H1 (cell line): ENCODE measurements at regions of chr2 and their contacts with region 1.

Region 1: GRCh38 chr2:42086500-42086953 is 38.7 kb downstream of the PKDCC start:
- DNase-seq: peak in 1 of 2 experiments; percentile 65
- H3K4me3 ChIP-seq: no peak overlapping the region
- H3K27ac ChIP-seq: no peak overlapping the region
- H3K4me1 ChIP-seq: peaks cover 0 to 6% (median under 1%) of the 10 kb centered on the region in 4 experiments; a peak in 3 of 7 replicates
- H3K27me3 ChIP-seq: peaks cover 0 to 5% (median 0%) of the 10 kb centered on the region in 4 experiments; a peak in 4 of 7 replicates
- CTCF ChIP-seq: peak; percentile 26 to 90 (median 75)
- EP300 ChIP-seq: no peak
- POLR2A ChIP-seq: no peak
- RAD21 ChIP-seq: peak; percentile 98 to 99

Region 2: GRCh38 chr2:41853427-41854216 is 232.9 kb before region 1 on chr2:
- CTCF ChIA-PET with region 1: interaction called, 490 read pairs
- POLR2A ChIA-PET with region 1: interaction called, 3 read pairs
- DNase-seq: peak; percentile 21 to 79
- H3K4me3 ChIP-seq: no peak overlapping the region
- H3K27ac ChIP-seq: no peak overlapping the region
- H3K4me1 ChIP-seq: peaks cover 0 to 3% (median 0%) of the 10 kb centered on the region in 4 experiments; a peak in 2 of 7 replicates
- H3K27me3 ChIP-seq: no peaks in the 10 kb centered on the region
- CTCF ChIP-seq: peak in 2 of 3 experiments; percentile 73 to 76; a peak in 3 of 4 replicates
- EP300 ChIP-seq: no peak
- POLR2A ChIP-seq: no peak
- RAD21 ChIP-seq: peak; percentile 92 to 97

Region 3: DNA sequence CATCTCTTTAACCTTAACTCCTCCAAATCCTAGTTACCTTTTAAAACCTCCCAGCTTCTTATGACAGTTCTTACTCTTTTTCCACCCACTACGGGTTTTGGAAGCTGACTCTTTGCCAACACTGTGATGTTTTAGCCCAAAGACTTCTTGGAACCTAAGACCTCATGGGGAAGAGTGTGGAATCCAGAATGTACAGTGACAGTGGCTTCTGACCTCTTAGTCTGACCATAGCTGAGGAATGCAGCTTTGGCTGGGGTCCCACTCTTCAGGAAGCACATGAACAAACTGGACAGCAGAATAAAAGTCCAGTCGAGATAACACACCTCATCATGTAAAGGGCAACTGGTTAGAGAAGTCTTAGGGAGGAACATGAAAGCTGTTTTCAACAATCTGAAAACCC is 199.8 kb before region 1 on chr2:
- CTCF ChIA-PET with region 1: interaction called, 890 read pairs
- POLR2A ChIA-PET with region 1: no interaction called
- DNase-seq: no peak
- H3K4me3 ChIP-seq: no peak overlapping the region
- H3K27ac ChIP-seq: no peak overlapping the region
- H3K4me1 ChIP-seq: no peaks in the 10 kb centered on the region
- H3K27me3 ChIP-seq: no peaks in the 10 kb centered on the region
- CTCF ChIP-seq: no peak
- EP300 ChIP-seq: no peak
- POLR2A ChIP-seq: no peak
- RAD21 ChIP-seq: no peak

Region 4: DNA sequence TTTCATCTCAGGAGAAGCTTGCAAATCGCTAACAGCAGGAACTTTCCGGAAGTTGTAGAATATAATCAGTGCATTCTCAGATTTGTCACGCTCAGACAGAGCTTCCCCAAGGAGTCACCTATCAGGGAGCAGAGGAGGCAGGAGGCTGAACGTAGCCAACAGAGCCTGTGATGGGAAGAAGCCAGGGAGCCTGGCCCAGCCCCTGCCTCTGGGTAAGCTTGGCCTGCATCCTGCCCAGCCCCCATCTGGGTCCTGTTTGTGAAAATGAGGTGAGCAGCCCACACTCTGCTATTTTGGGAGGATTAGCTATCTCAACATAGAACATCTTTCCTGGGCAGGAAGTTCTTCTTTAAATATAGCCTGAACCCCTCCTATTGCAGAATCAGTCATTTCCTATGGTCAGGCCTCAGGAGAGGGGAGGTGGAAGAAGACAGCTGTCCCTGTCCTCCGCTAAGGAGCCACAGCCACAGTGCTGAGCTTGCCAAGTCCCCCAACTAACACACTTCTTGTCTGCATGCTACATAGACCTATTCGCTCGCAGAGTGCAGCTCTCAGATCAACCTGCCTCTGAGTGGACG is 57.9 kb before region 1 on chr2:
- CTCF ChIA-PET with region 1: interaction called, 13 read pairs
- POLR2A ChIA-PET with region 1: interaction called, 3 read pairs
- DNase-seq: no peak
- H3K4me3 ChIP-seq: no peak overlapping the region
- H3K27ac ChIP-seq: no peak overlapping the region
- H3K4me1 ChIP-seq: peaks cover 19 to 42% (median 27%) of the 10 kb centered on the region in 4 experiments
- H3K27me3 ChIP-seq: peaks cover 0 to 12% (median 7%) of the 10 kb centered on the region in 4 experiments; a peak in 3 of 7 replicates
- CTCF ChIP-seq: no peak
- EP300 ChIP-seq: no peak
- POLR2A ChIP-seq: no peak
- RAD21 ChIP-seq: no peak

Region 5: DNA sequence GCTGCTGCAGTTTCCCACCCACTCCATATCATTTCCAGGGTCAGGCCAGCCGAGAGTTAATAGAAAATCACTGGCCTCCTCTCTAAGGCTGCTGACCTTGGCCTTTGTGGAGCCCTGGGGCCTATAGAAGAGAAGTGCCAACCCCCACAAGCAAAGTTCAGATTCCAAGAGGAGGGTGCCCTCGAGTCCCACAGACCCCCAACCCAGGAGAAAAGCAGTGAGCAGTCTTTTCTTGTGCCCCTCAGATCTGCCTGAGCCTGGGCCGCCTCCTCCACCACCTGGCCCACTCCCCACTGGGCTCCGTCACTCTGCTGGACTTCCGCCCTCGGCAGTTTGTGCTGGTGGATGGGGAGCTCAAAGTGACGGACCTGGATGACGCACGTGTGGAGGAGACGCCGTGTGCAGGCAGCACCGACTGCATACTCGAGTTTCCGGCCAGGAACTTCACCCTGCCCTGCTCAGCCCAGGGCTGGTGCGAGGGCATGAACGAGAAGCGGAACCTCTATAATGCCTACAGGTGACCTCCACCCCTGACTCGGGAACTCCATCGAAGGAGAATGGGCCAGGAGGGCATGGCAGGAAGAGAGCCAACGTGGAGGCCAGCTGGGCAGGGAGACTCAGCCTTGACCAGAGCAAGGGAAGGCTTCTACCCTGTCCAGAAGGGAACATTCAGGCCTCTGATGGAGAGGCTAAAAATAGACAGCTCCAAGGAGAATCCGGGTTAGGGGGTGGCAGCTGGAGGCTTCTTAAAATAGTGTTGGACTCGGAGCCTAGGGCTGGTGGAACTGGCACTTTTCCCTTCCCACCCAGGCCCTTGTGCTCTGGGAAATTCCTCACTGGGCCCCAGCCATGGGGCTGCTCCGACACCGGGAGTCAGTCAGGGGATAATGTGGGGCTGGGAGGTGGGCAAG is 32.5 kb before region 1 on chr2:
- CTCF ChIA-PET with region 1: interaction called, 61 read pairs
- POLR2A ChIA-PET with region 1: interaction called, 4 read pairs
- DNase-seq: no peak
- H3K4me3 ChIP-seq: no peak overlapping the region
- H3K27ac ChIP-seq: no peak overlapping the region
- H3K4me1 ChIP-seq: peaks cover 5 to 45% (median 36%) of the 10 kb centered on the region in 4 experiments
- H3K27me3 ChIP-seq: peaks cover 0 to 6% (median 4%) of the 10 kb centered on the region in 4 experiments; a peak in 5 of 7 replicates
- CTCF ChIP-seq: no peak
- EP300 ChIP-seq: no peak
- POLR2A ChIP-seq: no peak
- RAD21 ChIP-seq: no peak

Region 6: DNA sequence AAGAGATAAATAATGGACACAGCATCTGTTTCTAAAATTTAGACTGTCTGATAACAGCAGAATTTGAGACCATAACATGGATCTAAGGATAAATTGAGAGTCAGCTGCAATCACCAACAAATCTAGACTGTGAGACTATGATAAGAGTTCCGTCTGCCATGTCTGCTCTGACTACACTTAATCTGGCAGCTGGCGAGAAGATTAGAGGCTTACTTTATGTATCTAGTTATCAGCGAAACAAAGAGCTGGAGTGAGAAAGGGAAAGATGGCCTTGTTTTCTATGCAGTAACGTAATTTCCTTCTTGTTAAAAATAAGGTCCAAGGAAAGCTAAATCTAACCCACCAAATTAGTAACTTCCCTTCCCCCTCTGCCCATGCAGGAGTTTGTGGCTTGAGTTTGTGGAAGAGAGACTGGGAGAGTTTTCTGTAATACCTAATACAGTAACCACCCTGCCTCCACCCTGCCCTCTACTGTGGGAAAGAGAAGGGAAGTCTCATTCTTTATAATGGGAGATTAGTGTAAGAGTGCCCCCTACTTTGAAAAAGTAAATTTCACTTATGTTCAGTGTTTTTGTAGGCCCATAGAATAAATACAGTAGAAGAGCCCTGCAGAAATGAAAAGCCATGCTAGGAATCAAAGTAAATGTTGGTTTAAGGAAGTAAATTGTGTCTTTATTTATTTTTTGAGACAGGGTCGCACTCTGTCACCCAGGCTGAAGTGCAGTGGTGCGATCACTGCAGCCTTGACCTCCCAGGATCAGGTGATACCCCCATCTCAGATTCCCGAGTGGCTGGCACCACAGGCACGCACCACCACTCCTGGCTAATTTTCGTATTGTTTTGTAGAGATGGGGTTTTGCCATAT is 110.1 kb after region 1 on chr2:
- CTCF ChIA-PET with region 1: interaction called, 25 read pairs
- POLR2A ChIA-PET with region 1: no interaction called
- DNase-seq: peak in 1 of 2 experiments; percentile 9
- H3K4me3 ChIP-seq: no peak overlapping the region
- H3K27ac ChIP-seq: no peak overlapping the region
- H3K4me1 ChIP-seq: peaks cover 0 to 7% (median 2%) of the 10 kb centered on the region in 4 experiments; a peak in 2 of 7 replicates
- H3K27me3 ChIP-seq: no peaks in the 10 kb centered on the region
- CTCF ChIP-seq: peak in 2 of 3 experiments; percentile 68 to 97; a peak in 3 of 4 replicates
- EP300 ChIP-seq: no peak
- POLR2A ChIP-seq: no peak
- RAD21 ChIP-seq: peak; percentile 75 to 77